ENCODE measurements at regions of chr14 and their contacts with region 1.

Region 1: DNA sequence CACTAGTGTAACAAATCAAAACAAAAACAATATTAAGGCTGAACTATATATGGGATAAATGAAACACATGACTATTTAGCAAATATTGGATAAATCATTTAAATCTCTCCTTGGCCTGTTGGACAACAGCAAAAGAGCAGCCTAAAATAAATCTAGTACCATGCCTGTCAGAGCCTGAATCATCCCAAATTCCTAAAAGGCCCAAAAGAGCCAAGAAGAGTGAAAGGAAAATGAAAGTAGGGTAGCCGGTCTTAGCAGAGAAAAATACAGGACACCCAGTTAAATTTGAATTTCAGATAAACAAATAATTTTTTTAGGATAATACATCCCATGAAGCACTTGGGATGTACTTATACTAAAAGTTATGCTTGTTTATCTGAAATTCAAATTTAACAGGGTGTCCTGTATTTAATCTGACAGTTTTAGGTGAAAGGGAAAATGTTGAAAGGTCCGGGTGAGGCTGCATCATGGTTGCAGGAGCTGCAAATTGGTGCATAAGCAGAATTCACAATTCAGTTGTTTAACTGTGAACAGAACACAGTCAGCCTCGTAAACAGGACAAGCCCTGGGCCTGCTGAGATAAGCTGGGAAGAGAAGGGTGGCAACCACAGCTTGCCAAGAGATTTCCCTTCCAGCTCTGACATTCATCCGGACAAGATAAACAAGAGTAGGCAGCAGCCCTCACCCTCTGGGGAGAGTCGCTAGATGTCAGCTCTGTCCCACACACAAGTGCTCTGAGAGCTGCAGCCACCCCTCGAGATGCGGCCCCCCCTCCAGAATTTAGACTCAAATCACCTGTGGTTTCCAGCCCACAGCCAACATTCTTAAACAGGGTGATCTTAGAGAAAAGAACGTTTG is 30.3 kb downstream of the DMAC2L start:
- DNase-seq: peak in 1 of 2 donors; percentile 90
- H3K4me3 ChIP-seq: peak overlapping the region; percentile 9 to 27
- H3K27ac ChIP-seq: peak overlapping the region; percentile 83
- H3K4me1 ChIP-seq: peaks cover 68% of the 10 kb centered on the region
- H3K27me3 ChIP-seq: no peaks in the 10 kb centered on the region
- CTCF ChIP-seq: peak in 1 of 3 experiments; percentile 33
- POLR2A ChIP-seq: no peak

Region 2: GRCh38 chr14:50396631-50397390 is 54.4 kb after region 1 on chr14 and contains the start of gene CDKL1:
- intact Hi-C with region 1: loop called (anchors 10 kb)
- DNase-seq: peak in 1 of 2 donors; percentile 88
- H3K4me3 ChIP-seq: peak within 1 kb of the TSS; percentile 57 to 96
- H3K27ac ChIP-seq: peak within 1 kb of the TSS; percentile 80
- H3K4me1 ChIP-seq: peaks cover 42% of the 10 kb centered on the region
- H3K27me3 ChIP-seq: no peaks in the 10 kb centered on the region
- CTCF ChIP-seq: no peak
- POLR2A ChIP-seq: peak in 1 of 2 donors; percentile 7
- total RNA-seq, gene CDKL1: 30.7 TPM

Region 3: GRCh38 chr14:50410921-50411320 is 68.5 kb after region 1 on chr14:
- intact Hi-C with region 1: no loop called
- DNase-seq: no peak
- H3K4me3 ChIP-seq: no peak overlapping the region
- H3K27ac ChIP-seq: no peak overlapping the region
- H3K4me1 ChIP-seq: peaks cover 7% of the 10 kb centered on the region
- H3K27me3 ChIP-seq: no peaks in the 10 kb centered on the region
- CTCF ChIP-seq: no peak
- POLR2A ChIP-seq: no peak

Region 4: GRCh38 chr14:50425816-50426215 is 83.4 kb after region 1 on chr14:
- intact Hi-C with region 1: no loop called
- DNase-seq: no peak
- H3K4me3 ChIP-seq: no peak overlapping the region
- H3K27ac ChIP-seq: no peak overlapping the region
- H3K4me1 ChIP-seq: no peaks in the 10 kb centered on the region
- H3K27me3 ChIP-seq: no peaks in the 10 kb centered on the region
- CTCF ChIP-seq: no peak
- POLR2A ChIP-seq: no peak

Measured in vagina (tissue), 2 donors.